ENCODE measurements at regions of chr20 and their contacts with region 1.

Region 1: GRCh38 chr20:40980106-40980827 is 48.4 kb upstream of the TOP1 start:
- DNase-seq: no peak
- H3K4me3 ChIP-seq: no peak overlapping the region
- H3K27ac ChIP-seq: no peak overlapping the region
- H3K27me3 ChIP-seq: no peaks in the 10 kb centered on the region
- CTCF ChIP-seq: no peak

Region 2: DNA sequence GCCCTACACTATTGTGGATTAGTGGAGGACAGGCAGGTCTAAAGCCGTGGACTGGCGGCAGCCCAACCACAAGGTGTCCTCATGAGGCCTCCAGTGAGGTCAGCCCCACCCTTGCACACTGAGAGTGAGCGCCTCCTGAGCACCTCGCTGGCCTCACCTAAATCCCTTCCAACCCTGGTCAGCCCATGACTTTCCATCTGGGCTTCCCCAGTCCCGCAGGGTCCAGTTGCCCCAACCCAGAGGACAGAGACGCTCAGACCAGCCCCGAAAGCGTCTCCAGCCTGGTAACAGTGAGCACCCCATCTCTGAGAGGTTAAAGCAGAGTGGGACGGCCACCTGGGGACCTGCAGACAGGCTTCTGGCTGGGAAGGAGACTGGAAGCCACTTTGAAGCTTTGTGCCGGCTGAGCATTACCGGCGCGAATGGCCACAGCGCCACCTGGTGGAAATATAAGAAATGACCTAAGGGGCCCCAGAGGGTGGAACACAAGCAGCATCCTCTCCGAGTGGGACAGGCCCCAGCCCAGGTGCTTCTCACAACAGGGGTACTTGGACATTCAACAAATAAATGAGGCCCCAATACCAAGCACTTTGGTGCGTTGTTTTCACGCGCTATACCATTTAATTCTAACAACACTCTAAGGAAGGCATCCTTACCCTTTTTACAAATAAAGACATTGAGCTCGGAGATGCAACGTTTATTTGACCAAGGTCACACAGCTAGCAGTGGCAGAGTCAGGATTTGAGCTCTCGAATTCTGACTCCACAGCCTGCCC is 17.4 kb before region 1 on chr20:
- CTCF ChIA-PET with region 1: interaction called, 19 read pairs
- POLR2A ChIA-PET with region 1: no interaction called
- DNase-seq: no peak
- H3K4me3 ChIP-seq: no peak overlapping the region
- H3K27ac ChIP-seq: no peak overlapping the region
- H3K27me3 ChIP-seq: no peaks in the 10 kb centered on the region
- CTCF ChIP-seq: peak; percentile 85

Region 3: GRCh38 chr20:40970201-40970600 is 10.1 kb before region 1 on chr20:
- CTCF ChIA-PET with region 1: interaction called, 19 read pairs
- POLR2A ChIA-PET with region 1: no interaction called
- DNase-seq: no peak
- H3K4me3 ChIP-seq: no peak overlapping the region
- H3K27ac ChIP-seq: no peak overlapping the region
- H3K27me3 ChIP-seq: no peaks in the 10 kb centered on the region
- CTCF ChIP-seq: peak; percentile 28; the same call in 1 of the 2 replicates

Measured in AG04450 (cell line).